ENCODE measurements at regions of chr5 and their contacts with region 1.

Region 1: DNA sequence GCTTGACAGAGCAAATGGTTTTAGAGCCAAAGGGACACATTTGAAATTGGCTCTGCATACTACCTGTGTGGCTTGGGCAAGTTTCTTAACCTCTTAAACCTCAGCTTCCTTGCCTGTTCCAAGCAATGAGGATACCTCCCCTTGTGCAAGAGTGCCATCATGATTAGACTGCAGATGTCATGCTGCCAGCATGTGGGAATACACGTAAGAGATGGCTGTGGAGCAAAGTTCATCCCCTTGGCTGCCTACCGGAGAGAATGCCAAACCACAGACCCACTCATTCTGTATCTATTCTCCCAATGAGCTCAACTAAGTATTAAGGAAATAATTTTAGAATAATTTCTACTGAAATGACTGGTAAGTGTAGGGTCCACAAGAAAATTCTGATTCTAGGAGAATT is 101.3 kb downstream of the WDR41 start:
- DNase-seq: no peak
- ATAC-seq: no peak
- H3K4me3 ChIP-seq: no peak overlapping the region
- H3K27ac ChIP-seq: no peak overlapping the region
- H3K4me1 ChIP-seq: no peaks in the 10 kb centered on the region
- H3K27me3 ChIP-seq: no peaks in the 10 kb centered on the region
- CTCF ChIP-seq: no peak

Region 2: GRCh38 chr5:77418601-77419591 is 28.1 kb after region 1 on chr5:
- intact Hi-C with region 1: loop called in 1 of 2 experiments (anchors 1 kb)
- DNase-seq: no peak
- ATAC-seq: no peak
- H3K4me3 ChIP-seq: no peak overlapping the region
- H3K27ac ChIP-seq: no peak overlapping the region
- H3K4me1 ChIP-seq: no peaks in the 10 kb centered on the region
- H3K27me3 ChIP-seq: peaks cover 0 to 9% (median 4%) of the 10 kb centered on the region in 3 donors
- CTCF ChIP-seq: no peak

Region 3: DNA sequence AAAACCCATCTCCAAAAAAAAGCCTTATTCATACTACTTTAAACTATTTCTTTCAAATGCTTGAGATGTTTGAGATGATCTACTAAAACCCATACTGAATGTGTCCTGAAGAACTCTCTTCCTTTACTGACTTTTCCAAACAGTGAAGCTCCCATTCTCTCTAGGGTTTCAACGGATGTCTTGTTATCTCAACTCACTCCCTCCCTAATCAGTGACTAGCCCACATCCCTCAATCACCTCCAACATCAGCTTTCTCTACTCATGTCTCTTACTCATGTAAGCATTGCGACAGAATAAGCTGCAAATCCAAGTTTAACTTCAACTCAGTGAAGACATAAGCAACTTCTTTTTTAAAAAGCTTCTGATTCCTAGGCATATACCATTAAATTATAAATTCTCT is 59.2 kb after region 1 on chr5:
- intact Hi-C with region 1: no loop called
- DNase-seq: no peak
- ATAC-seq: no peak
- H3K4me3 ChIP-seq: no peak overlapping the region
- H3K27ac ChIP-seq: no peak overlapping the region
- H3K4me1 ChIP-seq: no peaks in the 10 kb centered on the region
- H3K27me3 ChIP-seq: no peaks in the 10 kb centered on the region
- CTCF ChIP-seq: no peak

Region 4: GRCh38 chr5:77697692-77698091 is 306.9 kb after region 1 on chr5:
- intact Hi-C with region 1: no loop called
- DNase-seq: no peak
- ATAC-seq: no peak
- H3K4me3 ChIP-seq: no peak overlapping the region
- H3K27ac ChIP-seq: no peak overlapping the region
- H3K4me1 ChIP-seq: peaks cover 8% of the 10 kb centered on the region
- H3K27me3 ChIP-seq: no peaks in the 10 kb centered on the region
- CTCF ChIP-seq: no peak